GM18951 (cell line): ENCODE measurements at regions of chr7 and their contacts with region 1.

Region 1: GRCh38 chr7:112495810-112496462 is 15.1 kb downstream of the LSMEM1 start:
- POLR2A ChIP-seq: no peak

Region 2: DNA sequence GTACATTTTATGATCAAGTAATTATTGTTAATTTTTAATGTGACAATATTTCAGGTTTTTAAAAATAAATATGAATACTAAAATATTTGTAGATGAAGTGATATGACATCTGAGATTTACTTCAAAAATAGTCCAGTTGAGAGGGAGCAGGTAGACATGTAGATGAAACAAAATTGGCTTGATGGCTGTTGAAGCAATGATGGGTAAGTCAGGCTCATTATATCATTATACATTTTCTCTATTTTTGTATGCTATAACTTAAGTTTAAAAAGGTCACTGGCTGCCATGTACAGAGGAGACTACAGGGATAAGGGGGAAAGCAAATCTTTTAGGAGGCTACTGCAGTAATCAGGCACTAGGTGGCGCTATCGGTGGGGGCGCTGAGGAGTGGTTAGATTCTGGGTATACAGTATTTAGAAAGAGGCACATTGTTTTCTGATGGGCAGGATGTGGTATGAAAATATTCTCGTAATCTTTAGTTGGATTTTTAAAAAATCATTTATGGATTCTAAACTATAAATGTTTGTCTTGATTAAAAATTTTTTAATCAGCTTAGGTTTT is 743.8 kb before region 1 on chr7:
- in situ Hi-C with region 1: loop called (anchors 25 kb)
- POLR2A ChIP-seq: no peak

Region 3: DNA sequence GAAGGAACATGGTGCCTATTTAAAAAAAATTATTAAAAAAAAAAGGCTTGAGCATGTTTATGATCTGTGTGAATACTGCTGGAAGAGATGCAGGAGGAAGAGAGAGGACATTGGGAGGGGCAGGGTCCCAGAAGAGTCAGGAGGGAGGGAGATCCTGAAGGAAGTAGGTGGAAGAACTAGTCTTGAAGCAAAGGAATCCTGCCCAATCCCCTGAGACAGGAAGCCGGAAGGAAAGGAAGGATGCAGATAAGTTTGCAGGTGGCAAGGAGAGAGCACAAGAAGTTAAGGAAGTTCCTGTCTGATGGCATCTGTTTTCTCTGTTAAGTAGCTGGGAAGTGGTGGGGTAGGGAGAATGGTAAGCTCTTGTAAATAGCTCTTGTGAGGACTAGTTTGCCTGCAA is 608.2 kb before region 1 on chr7:
- in situ Hi-C with region 1: no loop called
- POLR2A ChIP-seq: no peak